ENCODE measurements at regions of chr1 and their contacts with region 1.

Region 1: GRCh38 chr1:218330043-218330623 is 15.0 kb upstream of the TGFB2 start:
- DNase-seq: no peak
- ATAC-seq: peak; percentile 47
- H3K4me3 ChIP-seq: no peak overlapping the region
- H3K4me1 ChIP-seq: no peaks in the 10 kb centered on the region
- CTCF ChIP-seq: no peak

Region 2: DNA sequence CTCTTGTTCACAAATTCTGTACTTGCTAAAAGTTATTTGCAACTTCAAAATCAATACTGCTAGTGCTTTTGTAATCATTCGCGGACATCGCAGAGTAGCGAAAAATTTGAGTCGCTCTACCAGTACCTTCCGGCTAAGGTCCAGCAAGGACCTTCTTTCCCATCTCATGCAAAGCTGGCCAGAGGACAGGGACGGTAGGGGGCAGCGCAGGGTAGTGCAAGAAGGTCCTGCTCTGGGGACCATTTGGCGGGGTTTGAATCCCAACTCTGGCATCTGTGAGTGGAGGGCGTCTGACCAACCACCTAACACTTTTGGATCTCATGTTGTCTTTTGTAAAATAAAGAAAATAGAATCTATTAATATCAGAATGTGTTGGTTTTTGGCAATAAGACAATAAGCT is 440.7 kb before region 1 on chr1:
- intact Hi-C with region 1: no loop called
- DNase-seq: peak in 1 of 3 donors; percentile 5
- ATAC-seq: no peak
- H3K4me3 ChIP-seq: no peak overlapping the region
- H3K4me1 ChIP-seq: no peaks in the 10 kb centered on the region
- CTCF ChIP-seq: no peak

Region 3: GRCh38 chr1:218025454-218025853 is 304.7 kb before region 1 on chr1:
- intact Hi-C with region 1: no loop called
- DNase-seq: no peak
- ATAC-seq: no peak
- H3K4me3 ChIP-seq: no peak overlapping the region
- H3K4me1 ChIP-seq: no peaks in the 10 kb centered on the region
- CTCF ChIP-seq: no peak

Region 4: GRCh38 chr1:218259800-218260199 is 70.3 kb before region 1 on chr1:
- intact Hi-C with region 1: no loop called
- DNase-seq: no peak
- ATAC-seq: no peak
- H3K4me3 ChIP-seq: no peak overlapping the region
- H3K4me1 ChIP-seq: no peaks in the 10 kb centered on the region
- CTCF ChIP-seq: no peak

Region 5: DNA sequence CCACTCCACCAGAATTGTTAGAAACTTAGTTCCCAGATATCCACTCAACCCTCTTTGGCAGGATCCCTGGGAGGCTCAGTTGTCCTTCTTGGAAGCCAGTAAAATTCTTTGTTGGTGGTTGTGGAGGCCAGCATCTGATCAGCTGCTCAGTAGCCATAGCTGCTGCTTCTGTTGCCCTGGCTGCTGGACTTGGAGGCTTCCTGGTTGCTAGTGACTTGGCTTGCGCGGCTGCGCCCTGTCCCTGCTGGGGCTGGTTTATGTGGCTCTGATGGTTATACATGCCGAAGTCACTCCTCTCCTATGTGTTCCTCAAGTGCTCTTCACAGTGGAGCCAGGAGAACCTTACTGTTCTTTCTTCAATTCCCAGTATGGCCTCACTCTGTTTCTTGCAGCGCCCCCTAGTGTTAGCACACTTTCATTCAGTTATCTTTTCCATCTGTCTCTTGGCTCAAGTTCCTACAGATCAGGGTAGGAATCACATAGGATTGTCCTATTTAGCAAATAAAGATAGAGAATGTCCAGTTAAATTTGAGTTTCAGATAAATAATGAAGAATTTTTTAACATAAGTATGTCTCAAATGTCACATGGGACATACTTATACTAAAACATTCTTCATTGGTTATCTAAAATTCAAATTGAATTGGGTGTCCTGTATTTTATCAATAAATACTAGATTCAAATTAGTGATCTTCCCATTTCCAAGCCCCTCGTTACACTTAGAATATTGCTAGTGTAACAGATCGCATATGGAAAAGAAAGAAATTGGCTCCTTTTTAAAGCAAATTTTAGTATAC is 191.4 kb after region 1 on chr1:
- intact Hi-C with region 1: loop called in 1 of 2 experiments (anchors 10 kb)
- DNase-seq: peak in 1 of 3 donors; percentile 69
- ATAC-seq: peak; percentile 42
- H3K4me3 ChIP-seq: no peak overlapping the region
- H3K4me1 ChIP-seq: no peaks in the 10 kb centered on the region
- CTCF ChIP-seq: peak; percentile 24

Region 6: GRCh38 chr1:219416594-219417238 is 1086.6 kb after region 1 on chr1:
- intact Hi-C with region 1: loop called in 1 of 2 experiments (anchors 10 kb)
- DNase-seq: peak in 1 of 3 donors; percentile 83
- ATAC-seq: peak; percentile 73
- H3K4me3 ChIP-seq: no peak overlapping the region
- H3K4me1 ChIP-seq: no peaks in the 10 kb centered on the region
- CTCF ChIP-seq: peak; percentile 20